ENCODE measurements at regions of chr2 and their contacts with region 1.

Region 1: DNA sequence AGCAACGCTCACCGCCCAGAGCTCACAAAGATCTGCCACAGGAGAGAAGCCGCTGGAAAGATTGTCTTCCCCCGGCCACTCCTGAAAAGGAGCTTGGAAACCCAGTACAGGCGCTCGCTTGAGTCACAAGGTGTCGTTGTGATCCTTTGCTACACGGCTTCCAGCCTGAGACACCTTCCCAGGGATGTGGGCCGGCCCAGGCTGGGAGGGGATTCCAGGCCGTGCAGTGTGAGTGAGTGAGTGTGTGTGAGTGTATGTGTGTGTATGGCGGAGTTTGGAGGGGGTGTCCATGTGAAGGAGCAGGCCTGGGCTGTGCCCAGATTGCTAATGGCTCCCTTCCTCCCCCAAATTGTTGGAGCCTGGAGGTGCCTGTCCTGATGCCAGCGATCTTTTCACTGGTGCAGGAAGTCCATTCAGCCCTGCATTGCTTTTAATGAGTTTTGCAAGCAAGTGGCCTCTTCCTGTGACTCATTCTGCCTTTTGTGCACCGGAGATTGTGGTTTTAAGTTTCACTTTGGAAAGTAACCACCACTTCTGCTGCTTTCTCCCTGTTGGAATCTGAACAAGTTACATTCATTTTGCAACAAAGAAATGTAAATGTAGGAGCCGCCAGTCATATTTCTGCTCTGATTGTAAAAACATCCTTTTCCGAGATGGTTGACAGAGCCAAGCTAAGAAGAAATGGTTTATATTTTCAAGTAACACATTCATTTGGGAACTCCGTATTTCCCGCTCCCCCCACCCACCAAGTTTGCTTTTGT is 83.7 kb downstream of the LPIN1 start:
- ATAC-seq: peak; percentile 83 to 99 (median 96)
- H3K4me3 ChIP-seq: peak overlapping the region in 4 of 5 donors; percentile 3 to 15 (median 10)
- H3K27ac ChIP-seq: peak overlapping the region; percentile 17 to 29
- H3K4me1 ChIP-seq: peaks cover 13 to 15% of the 10 kb centered on the region in 2 donors

Region 2: DNA sequence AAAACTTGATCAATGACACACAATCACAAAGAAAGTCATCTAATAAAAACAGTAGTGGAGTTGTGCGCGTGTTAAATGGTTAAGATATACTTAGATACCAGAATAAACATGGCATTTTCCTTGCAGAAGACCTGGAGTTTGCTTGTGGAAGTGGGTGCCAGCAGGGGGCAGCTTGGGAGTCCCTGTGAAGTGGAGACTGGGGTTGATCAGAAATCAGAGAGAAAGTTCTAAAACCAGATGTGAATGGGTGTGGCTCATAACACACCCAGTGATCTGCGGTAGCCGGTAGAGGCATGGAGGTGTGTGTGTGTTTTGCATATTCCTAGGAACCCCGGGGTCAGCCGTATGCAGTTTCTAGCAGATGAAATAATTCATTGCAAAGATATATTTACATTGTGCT is 586.5 kb after region 1 on chr2:
- in situ Hi-C with region 1: loop called in 1 of 9 experiments (anchors 25 kb)
- ATAC-seq: peak in 3 of 8 experiments; percentile 95 to 97 (median 96)
- H3K4me3 ChIP-seq: no peak overlapping the region
- H3K27ac ChIP-seq: no peak overlapping the region
- H3K4me1 ChIP-seq: peaks cover 10 to 14% of the 10 kb centered on the region in 2 donors

Measured in motor neuron (in vitro differentiated cells).